ENCODE measurements at regions of chr5 and their contacts with region 1.

Region 1: DNA sequence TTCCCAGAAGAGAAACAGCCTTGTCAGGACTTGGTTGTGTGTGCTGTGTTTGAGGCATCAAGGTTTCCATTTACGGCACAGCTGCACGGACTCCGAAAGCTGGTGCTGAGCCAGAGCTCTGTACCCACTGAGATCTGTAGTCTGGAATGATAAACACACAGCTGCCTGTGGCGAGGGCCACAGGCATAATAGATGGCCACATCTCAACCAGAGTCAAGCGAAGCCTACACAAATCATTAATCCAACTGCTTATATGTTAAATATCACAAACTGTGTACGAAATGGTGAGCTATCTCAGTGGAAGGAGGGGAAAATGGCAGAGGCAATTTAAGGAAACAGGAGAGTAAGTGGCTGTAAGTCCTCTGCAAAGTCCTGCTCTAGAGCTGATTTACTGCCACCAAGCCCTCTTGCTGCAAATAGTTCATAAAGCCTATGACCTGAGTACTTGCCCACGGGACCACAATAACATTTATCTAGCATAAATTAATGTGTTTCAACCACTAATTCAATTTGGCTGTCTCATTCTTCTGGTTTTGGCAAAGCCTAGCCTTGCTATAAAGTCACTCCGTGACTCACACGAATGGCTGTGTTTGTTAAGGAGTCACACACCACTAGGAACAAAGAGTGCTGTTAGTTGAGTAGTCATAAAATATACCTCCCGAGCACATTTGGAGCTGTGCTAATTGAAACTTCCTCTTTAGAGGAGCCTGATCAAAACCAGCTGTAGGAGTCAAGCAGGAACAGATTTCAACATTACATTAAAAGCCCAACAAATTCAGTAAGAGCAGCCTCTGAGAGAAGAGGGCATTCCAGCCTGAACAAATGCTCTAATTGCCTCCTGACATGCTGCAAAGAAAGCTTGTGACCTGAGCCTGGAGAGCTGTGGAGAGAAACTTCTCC is 738.6 kb upstream of the ZNF608 start:
- DNase-seq: peak; percentile 97
- ATAC-seq: peak; percentile 85
- H3K4me3 ChIP-seq: peak overlapping the region; percentile 0; the same call in 1 of the 2 replicates
- H3K27ac ChIP-seq: peak overlapping the region; percentile 87
- H3K4me1 ChIP-seq: peaks cover 9% of the 10 kb centered on the region
- H3K27me3 ChIP-seq: no peaks in the 10 kb centered on the region; the same call in 1 of the 2 replicates
- CTCF ChIP-seq: no peak
- POLR2A ChIP-seq: no peak
- RAD21 ChIP-seq: no peak; the same call in 1 of the 2 replicates

Region 2: GRCh38 chr5:124649491-124650146 is 835.4 kb before region 1 on chr5:
- CTCF ChIA-PET with region 1: no interaction called
- POLR2A ChIA-PET with region 1: no interaction called
- dilution Hi-C with region 1: no loop called
- in situ Hi-C with region 1: no loop called
- intact Hi-C with region 1: loop called (anchors 2 kb)
- DNase-seq: peak; percentile 93
- ATAC-seq: peak; percentile 23; the same call in 1 of the 2 replicates
- H3K4me3 ChIP-seq: no peak overlapping the region
- H3K27ac ChIP-seq: peak overlapping the region; percentile 85
- H3K4me1 ChIP-seq: peaks cover 23% of the 10 kb centered on the region
- H3K27me3 ChIP-seq: no peaks in the 10 kb centered on the region
- CTCF ChIP-seq: no peak
- POLR2A ChIP-seq: no peak
- RAD21 ChIP-seq: 0 out of 2 replicates have a peak, but pooled peaks have one; percentile 8

Region 3: GRCh38 chr5:124735169-124735858 is 749.7 kb before region 1 on chr5:
- CTCF ChIA-PET with region 1: no interaction called
- POLR2A ChIA-PET with region 1: no interaction called
- dilution Hi-C with region 1: no loop called
- in situ Hi-C with region 1: loop called (anchors 10 kb)
- intact Hi-C with region 1: loop called (anchors 2 kb)
- DNase-seq: no peak
- ATAC-seq: peak; percentile 35
- H3K4me3 ChIP-seq: peak overlapping the region; percentile 33
- H3K27ac ChIP-seq: peak overlapping the region; percentile 91; the same call in 1 of the 2 replicates
- H3K4me1 ChIP-seq: peaks cover 9% of the 10 kb centered on the region
- H3K27me3 ChIP-seq: no peaks in the 10 kb centered on the region; the same call in 1 of the 2 replicates
- CTCF ChIP-seq: no peak
- POLR2A ChIP-seq: no peak
- RAD21 ChIP-seq: no peak

Region 4: DNA sequence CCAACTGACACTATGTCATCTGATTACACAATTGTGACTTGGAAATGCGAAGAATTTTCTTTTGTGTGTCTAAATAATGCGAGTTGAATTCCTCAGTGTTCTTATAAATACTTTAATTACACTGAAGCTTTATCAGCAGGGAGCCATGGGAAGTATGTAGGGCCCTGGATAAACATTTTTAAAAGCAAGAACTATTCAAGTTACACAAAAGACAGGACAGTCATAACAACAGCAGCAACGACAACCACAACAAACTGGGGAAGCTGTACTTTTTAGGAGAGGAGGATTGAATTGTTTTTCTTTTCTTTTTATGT is 488.3 kb before region 1 on chr5:
- CTCF ChIA-PET with region 1: no interaction called
- POLR2A ChIA-PET with region 1: no interaction called
- dilution Hi-C with region 1: no loop called
- in situ Hi-C with region 1: no loop called
- intact Hi-C with region 1: loop called (anchors 10 kb)
- DNase-seq: peak; percentile 56
- ATAC-seq: peak; percentile 68
- H3K4me3 ChIP-seq: no peak overlapping the region
- H3K27ac ChIP-seq: no peak overlapping the region; the same call in 1 of the 2 replicates
- H3K4me1 ChIP-seq: peaks cover 13% of the 10 kb centered on the region
- H3K27me3 ChIP-seq: no peaks in the 10 kb centered on the region
- CTCF ChIP-seq: no peak
- POLR2A ChIP-seq: no peak
- RAD21 ChIP-seq: no peak

Region 5: DNA sequence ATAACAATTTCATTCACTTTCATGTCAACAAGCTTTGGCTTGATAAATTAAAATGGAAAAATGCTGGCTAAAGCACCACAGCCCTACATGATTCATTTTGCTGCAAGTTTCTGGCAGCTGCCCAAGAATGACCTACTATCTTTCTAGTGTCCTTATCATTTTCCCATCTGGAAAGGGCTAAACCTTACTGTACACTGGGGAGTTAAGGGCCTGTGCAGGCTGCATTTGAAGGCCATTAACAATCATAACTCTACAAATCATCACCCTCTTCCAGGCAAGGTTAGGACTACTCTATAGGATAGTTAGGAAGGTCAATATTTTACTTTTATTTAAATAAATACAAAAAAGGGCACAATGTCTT is 158.9 kb before region 1 on chr5:
- CTCF ChIA-PET with region 1: no interaction called
- POLR2A ChIA-PET with region 1: no interaction called
- dilution Hi-C with region 1: no loop called
- in situ Hi-C with region 1: no loop called
- intact Hi-C with region 1: loop called (anchors 5 kb)
- DNase-seq: peak; percentile 88
- ATAC-seq: peak; percentile 80
- H3K4me3 ChIP-seq: no peak overlapping the region
- H3K27ac ChIP-seq: no peak overlapping the region
- H3K4me1 ChIP-seq: peaks cover 2% of the 10 kb centered on the region
- H3K27me3 ChIP-seq: no peaks in the 10 kb centered on the region
- CTCF ChIP-seq: no peak
- POLR2A ChIP-seq: no peak
- RAD21 ChIP-seq: no peak

Region 6: DNA sequence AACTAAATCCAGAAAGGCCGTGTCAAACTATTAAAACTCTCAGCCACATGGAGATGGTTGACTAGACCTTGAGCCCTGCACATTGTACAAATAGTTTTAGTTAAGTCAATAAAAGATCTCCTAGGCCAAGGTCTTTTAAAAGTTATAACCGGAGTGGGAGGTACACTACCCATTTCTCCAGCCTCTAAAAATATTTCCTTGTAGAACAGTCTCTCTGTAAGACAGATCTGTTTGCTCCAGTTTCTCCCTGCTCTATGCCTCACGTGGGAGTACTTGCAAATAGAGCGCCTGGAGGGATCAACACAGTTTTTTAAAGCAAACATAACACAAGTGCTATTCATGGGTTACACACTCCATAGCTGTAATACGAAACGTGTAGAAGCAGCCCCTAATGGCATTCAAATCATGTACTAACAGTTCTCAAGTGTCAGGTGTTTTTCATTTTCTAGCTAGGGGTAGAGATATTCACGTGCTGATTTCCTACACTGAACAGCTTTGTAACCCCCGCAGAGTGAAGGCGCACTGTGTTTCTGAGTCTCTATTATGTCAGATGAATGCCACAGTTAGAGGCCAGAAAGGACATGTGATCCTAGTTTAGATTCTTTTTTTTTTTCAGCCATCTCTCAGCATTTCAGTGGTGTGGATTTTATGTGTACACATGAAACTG is 234.8 kb after region 1 on chr5:
- CTCF ChIA-PET with region 1: no interaction called
- POLR2A ChIA-PET with region 1: no interaction called
- dilution Hi-C with region 1: no loop called
- in situ Hi-C with region 1: no loop called
- intact Hi-C with region 1: loop called (anchors 5 kb)
- DNase-seq: peak; percentile 18
- ATAC-seq: no peak
- H3K4me3 ChIP-seq: no peak overlapping the region
- H3K27ac ChIP-seq: no peak overlapping the region
- H3K4me1 ChIP-seq: peaks cover 3% of the 10 kb centered on the region; the same call in 1 of the 2 replicates
- H3K27me3 ChIP-seq: no peaks in the 10 kb centered on the region
- CTCF ChIP-seq: no peak
- POLR2A ChIP-seq: no peak
- RAD21 ChIP-seq: no peak